ENCODE measurements at regions of chr14 and their contacts with region 1.

Region 1: DNA sequence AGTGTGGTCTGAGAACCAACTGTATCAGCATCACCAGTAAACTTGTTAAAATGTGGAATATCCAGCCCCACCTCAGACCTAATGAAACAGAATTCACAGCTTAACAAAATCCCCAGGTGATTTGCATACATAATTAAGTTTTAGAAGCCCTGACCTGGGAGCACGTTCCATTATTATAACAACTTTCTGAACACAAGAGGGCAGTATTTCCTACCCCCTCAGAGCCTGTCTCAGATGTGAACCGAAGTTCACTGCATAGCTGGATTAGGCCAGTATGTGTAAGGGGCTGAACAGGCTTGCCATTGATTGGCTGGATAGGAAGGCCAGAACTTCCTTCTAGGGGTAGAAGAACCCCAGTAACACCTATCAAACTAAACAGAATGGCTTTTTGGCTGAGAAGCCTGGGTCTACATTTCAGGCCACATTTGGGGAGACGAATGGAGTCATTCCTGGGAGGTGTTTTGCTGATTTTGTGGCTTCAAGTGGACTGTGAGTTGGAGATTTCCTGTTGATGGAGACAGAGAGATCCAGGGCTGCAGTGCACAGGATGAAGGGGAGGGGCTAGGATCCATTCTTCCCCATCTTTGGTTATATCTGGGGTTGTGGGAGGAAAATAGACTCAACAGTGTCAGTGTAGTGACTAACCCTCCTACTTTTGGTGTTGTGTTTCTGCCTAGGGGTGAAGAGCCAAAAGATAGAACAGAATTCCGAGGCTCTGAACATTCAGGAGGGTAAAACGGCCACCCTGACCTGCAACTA is 94.7 kb upstream of the OR4E1 start:
- DNase-seq: peak in 1 of 2 experiments; percentile 7
- H3K4me3 ChIP-seq: no peak overlapping the region
- H3K27ac ChIP-seq: no peak overlapping the region
- H3K4me1 ChIP-seq: peaks cover 21% of the 10 kb centered on the region
- H3K27me3 ChIP-seq: no peaks in the 10 kb centered on the region
- CTCF ChIP-seq: peak; percentile 59

Region 2: DNA sequence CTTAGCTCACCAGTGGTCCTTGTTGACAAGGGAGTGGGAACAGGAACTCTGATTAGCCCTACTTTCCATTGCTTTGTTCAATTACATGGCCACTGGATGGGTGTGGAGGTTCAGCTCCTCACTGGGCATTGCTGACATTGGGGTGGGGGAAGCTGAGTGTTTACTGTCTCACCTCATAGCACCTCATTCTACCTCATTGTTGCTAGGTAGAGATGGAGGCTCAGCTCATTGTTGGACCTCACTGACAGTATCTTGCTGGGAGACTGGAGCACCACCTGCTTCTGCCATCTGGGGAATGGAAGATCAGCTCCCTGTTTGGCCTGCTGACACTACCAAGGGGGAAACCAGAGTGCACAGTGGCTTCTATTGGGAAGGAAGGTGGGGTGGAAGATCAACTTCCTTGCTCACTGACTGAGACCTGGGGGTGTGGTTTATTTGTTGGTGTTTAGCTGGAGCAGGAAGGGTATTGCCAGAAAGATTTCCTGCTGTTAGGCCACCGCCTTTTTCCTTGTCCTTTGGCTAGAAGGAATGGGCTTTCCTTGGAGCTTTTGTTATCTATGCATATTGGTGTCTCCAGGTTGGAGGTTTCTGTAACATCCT is 116.0 kb before region 1 on chr14:
- CTCF ChIA-PET with region 1: no interaction called
- POLR2A ChIA-PET with region 1: no interaction called
- intact Hi-C with region 1: no loop called
- DNase-seq: no peak
- H3K4me3 ChIP-seq: no peak overlapping the region
- H3K27ac ChIP-seq: no peak overlapping the region
- H3K4me1 ChIP-seq: no peaks in the 10 kb centered on the region
- H3K27me3 ChIP-seq: no peaks in the 10 kb centered on the region
- CTCF ChIP-seq: no peak

Region 3: DNA sequence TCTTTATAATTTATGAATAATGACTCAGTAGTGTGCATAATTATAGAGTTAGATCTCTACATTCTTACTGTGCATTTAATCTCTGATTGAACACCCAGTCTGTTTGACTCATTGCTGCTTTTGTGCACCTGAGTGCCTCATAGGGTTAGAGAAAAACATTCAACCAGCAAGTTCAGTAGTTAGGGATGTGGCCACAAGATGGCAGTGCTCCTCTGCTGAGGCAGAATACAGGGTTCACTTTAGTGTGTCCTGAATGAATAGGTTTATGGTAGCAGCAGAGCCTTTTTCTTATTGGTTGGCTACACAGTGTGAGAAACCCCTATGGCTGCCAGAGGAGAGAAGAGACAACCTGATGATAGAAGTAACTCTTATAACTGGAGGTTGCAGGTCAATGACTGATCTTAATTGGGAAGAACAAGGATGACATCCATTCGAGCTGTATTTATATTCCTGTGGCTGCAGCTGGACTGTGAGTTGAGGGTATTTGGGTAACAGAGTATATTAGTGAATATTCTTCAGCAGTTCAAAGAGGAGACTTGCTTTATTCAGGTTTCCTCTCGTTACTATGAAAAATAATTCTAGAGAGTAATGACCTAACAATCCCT is 100.2 kb after region 1 on chr14:
- CTCF ChIA-PET with region 1: no interaction called
- POLR2A ChIA-PET with region 1: no interaction called
- intact Hi-C with region 1: loop called (anchors 10 kb)
- DNase-seq: peak in 1 of 2 experiments; percentile 40
- H3K4me3 ChIP-seq: no peak overlapping the region
- H3K27ac ChIP-seq: no peak overlapping the region
- H3K4me1 ChIP-seq: 0 out of 2 replicates have a peak, but pooled peaks cover 6% of the 10 kb centered on the region
- H3K27me3 ChIP-seq: no peaks in the 10 kb centered on the region
- CTCF ChIP-seq: peak; percentile 77

Region 4: DNA sequence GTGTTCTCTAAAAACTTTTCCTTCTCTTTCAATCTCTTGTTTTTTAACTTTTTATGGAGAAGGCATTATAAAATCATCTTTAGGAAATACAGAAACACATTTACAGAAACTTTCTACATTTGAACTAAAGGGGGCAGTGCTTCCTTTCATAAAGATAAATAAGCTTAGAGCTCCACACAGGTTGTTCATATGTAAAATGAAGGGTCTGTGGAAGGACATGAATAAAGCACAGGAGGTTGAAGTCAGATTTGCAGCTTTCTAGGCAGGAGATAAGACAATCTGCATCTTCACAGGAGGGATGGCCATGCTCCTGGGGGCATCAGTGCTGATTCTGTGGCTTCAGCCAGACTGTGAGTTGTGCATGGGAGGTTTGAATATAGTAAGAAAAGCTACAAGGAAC is 394.8 kb after region 1 on chr14:
- CTCF ChIA-PET with region 1: no interaction called
- POLR2A ChIA-PET with region 1: interaction called, 12 read pairs
- intact Hi-C with region 1: no loop called
- DNase-seq: no peak
- H3K4me3 ChIP-seq: no peak overlapping the region
- H3K27ac ChIP-seq: no peak overlapping the region
- H3K4me1 ChIP-seq: peaks cover 41% of the 10 kb centered on the region
- H3K27me3 ChIP-seq: no peaks in the 10 kb centered on the region
- CTCF ChIP-seq: peak; percentile 57

Measured in PC-9 (cell line).